ENCODE measurements at regions of chr5 and their contacts with region 1.

Region 1: DNA sequence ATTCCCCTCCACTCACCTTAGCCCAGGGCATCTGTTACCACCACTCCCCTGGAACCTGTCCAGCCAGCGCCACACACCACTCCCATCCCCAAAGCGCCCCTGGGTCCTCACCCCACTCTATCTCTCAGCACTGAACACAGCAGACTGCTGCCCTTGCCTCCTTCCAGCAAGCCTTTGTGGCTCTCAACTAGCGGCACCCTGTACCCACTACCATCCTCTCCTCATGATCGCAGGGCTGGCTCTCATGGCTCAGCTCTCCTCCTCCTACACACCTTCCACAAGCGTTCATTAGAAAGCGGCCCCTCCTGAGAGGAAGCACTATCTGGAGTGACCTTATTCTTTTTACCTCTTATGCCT is 13.3 kb upstream of the BASP1 start:
- DNase-seq: no peak
- ATAC-seq: no peak
- H3K4me3 ChIP-seq: no peak overlapping the region
- H3K4me3 Mint-ChIP-seq: no peak overlapping the region
- H3K27ac ChIP-seq: no peak overlapping the region
- H3K27ac Mint-ChIP-seq: no peak overlapping the region
- H3K4me1 ChIP-seq: no peaks in the 10 kb centered on the region
- H3K4me1 Mint-ChIP-seq: no peaks in the 10 kb centered on the region
- H3K27me3 ChIP-seq: peaks cover 0 to 2% (median 0%) of the 10 kb centered on the region in 4 experiments
- H3K27me3 Mint-ChIP-seq: peaks cover 12% of the 10 kb centered on the region
- CTCF ChIP-seq: no peak

Region 2: GRCh38 chr5:16489322-16489791 is 714.8 kb before region 1 on chr5:
- CTCF ChIA-PET with region 1: no interaction called
- POLR2A ChIA-PET with region 1: no interaction called
- intact Hi-C with region 1: loop called (anchors 5 kb)
- DNase-seq: peak; percentile 25
- ATAC-seq: peak; percentile 43
- H3K4me3 ChIP-seq: no peak overlapping the region
- H3K4me3 Mint-ChIP-seq: no peak overlapping the region
- H3K27ac ChIP-seq: no peak overlapping the region
- H3K27ac Mint-ChIP-seq: no peak overlapping the region
- H3K4me1 ChIP-seq: no peaks in the 10 kb centered on the region
- H3K4me1 Mint-ChIP-seq: no peaks in the 10 kb centered on the region
- H3K27me3 ChIP-seq: no peaks in the 10 kb centered on the region
- H3K27me3 Mint-ChIP-seq: no peaks in the 10 kb centered on the region
- CTCF ChIP-seq: peak; percentile 65

Region 3: DNA sequence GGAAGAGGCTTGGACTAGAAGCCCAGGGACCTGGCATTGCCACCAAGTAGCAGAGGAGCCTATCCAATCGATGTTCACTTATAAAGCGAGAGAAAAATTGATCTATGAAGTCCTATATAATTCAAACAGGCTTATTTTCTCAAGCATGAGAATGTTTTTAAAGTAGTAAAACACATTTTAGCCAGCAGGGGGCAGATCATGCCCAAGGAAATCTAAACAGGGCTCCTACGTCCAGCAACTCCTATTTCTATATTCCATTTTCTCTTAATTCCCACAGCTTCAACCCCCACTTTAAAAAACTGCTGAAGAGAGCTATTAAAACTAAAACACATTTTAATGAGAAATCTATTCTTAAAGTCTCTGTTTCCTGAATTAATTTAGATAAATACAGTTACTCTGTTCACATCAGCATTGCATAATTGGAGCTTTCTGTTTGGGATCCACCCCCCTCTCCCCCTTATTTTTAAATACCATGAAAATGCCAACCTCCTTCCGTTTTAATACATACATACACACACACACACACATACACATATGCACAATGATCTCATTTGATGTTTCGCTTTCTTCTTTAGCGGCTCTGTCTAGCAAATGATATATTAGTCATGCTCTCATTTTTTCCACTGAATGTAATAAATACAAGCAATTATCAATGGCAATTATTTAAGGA is 412.9 kb before region 1 on chr5:
- CTCF ChIA-PET with region 1: interaction called, 10 read pairs
- POLR2A ChIA-PET with region 1: no interaction called
- intact Hi-C with region 1: loop called (anchors 1 kb)
- DNase-seq: peak; percentile 55
- ATAC-seq: no peak
- H3K4me3 ChIP-seq: no peak overlapping the region
- H3K4me3 Mint-ChIP-seq: no peak overlapping the region
- H3K27ac ChIP-seq: no peak overlapping the region
- H3K27ac Mint-ChIP-seq: no peak overlapping the region
- H3K4me1 ChIP-seq: no peaks in the 10 kb centered on the region
- H3K4me1 Mint-ChIP-seq: no peaks in the 10 kb centered on the region
- H3K27me3 ChIP-seq: no peaks in the 10 kb centered on the region
- H3K27me3 Mint-ChIP-seq: peaks cover 2% of the 10 kb centered on the region
- CTCF ChIP-seq: peak; percentile 83

Region 4: GRCh38 chr5:17178373-17178675 is 25.8 kb before region 1 on chr5:
- CTCF ChIA-PET with region 1: no interaction called
- POLR2A ChIA-PET with region 1: no interaction called
- intact Hi-C with region 1: no loop called
- DNase-seq: no peak
- ATAC-seq: no peak
- H3K4me3 ChIP-seq: no peak overlapping the region
- H3K4me3 Mint-ChIP-seq: no peak overlapping the region
- H3K27ac ChIP-seq: no peak overlapping the region
- H3K27ac Mint-ChIP-seq: no peak overlapping the region
- H3K4me1 ChIP-seq: no peaks in the 10 kb centered on the region
- H3K4me1 Mint-ChIP-seq: no peaks in the 10 kb centered on the region
- H3K27me3 ChIP-seq: no peaks in the 10 kb centered on the region
- H3K27me3 Mint-ChIP-seq: no peaks in the 10 kb centered on the region
- CTCF ChIP-seq: no peak

Region 5: GRCh38 chr5:17189381-17190036 is 14.6 kb before region 1 on chr5:
- CTCF ChIA-PET with region 1: interaction called, 27 read pairs
- POLR2A ChIA-PET with region 1: no interaction called
- intact Hi-C with region 1: no loop called
- DNase-seq: peak; percentile 74
- ATAC-seq: no peak
- H3K4me3 ChIP-seq: no peak overlapping the region
- H3K4me3 Mint-ChIP-seq: no peak overlapping the region
- H3K27ac ChIP-seq: no peak overlapping the region
- H3K27ac Mint-ChIP-seq: no peak overlapping the region
- H3K4me1 ChIP-seq: no peaks in the 10 kb centered on the region
- H3K4me1 Mint-ChIP-seq: peaks cover 4% of the 10 kb centered on the region
- H3K27me3 ChIP-seq: no peaks in the 10 kb centered on the region
- H3K27me3 Mint-ChIP-seq: peaks cover 6% of the 10 kb centered on the region
- CTCF ChIP-seq: peak; percentile 87

Measured in B cell (primary cell).